Activated CD4-positive, alpha-beta memory T cell treated with anti-CD3 and anti-CD28 coated beads for 36 hours (primary cell): ENCODE measurements at regions of chr1 and their contacts with region 1.

Region 1: DNA sequence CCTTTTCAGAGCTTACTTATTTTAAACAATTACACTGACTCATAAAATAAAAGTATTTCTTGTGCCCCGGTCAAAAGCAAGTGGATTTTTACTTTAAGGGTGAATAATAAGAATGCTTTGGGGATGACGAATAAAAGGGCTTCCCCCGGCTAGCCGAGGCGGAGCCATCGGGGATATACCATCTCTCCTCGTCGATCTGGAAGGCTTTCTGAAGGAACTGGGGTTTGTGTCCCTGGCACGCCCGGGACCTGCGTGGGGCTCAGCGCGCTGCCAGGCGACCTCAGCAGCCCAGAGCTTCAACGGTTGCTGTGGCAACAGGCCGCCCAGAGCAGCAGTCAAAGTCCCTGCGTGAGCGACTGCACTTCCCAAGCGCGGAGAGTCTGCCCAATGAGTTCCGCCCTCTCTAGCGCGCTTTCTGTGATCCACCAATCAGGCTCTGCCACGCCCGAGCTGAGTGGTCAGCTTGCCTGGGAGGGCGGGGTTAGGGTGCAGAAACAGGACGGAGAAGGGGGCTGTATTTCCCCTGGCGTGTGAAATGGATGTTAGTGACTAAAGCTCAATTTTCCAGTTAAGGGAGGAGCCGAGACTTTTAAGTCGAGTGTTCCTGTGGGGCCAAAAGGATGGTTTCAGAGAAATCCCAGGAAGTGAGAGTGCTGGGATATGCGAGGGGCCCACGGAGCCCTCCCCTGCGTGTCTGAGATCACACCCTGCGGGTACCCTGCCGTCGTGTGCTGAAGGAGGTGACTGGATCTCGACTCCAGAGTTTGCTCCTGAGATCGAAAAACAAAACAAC is 33.0 kb upstream of the MGST3 start:
- DNase-seq: peak; percentile 98
- H3K4me3 Mint-ChIP-seq: peak overlapping the region; percentile 91
- H3K27ac Mint-ChIP-seq: peak overlapping the region; percentile 84
- H3K4me1 Mint-ChIP-seq: peaks cover 33% of the 10 kb centered on the region
- H3K27me3 Mint-ChIP-seq: peaks cover 20% of the 10 kb centered on the region

Region 2: DNA sequence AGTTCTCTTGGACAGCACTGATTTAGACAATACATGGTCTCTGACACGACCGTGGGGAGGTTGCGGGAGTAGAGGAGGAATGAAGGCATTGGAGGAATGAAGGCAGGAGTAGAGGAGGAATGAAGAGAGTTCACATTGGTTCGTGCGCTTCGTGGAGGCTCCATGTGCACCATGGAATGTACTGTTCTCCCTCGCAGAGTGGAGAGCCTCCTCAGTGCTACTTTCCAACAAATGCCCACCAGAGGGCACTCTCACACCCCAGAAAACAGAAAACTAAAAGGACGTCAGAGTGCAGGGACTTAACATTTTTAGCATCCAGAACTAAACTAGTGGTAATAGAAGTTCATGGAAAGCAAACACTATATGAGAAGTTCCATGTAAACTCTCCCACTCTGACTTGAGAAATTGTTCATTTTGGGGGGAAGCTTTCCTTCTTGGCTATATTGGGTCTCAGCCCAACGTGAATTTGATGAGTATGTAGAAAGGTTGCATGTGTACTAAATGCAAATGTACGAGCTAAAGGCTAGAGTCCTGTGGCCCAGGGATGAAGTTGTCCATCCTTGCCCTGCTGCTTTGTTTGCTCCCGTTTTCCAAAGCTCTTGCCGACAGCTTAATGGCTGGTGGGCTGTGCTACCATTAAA is 453.2 kb before region 1 on chr1:
- CTCF ChIA-PET with region 1: no interaction called
- POLR2A ChIA-PET with region 1: no interaction called
- intact Hi-C with region 1: loop called (anchors 10 kb)
- DNase-seq: peak; percentile 49
- H3K4me3 Mint-ChIP-seq: no peak overlapping the region
- H3K27ac Mint-ChIP-seq: no peak overlapping the region
- H3K4me1 Mint-ChIP-seq: no peaks in the 10 kb centered on the region
- H3K27me3 Mint-ChIP-seq: peaks cover 5% of the 10 kb centered on the region

Region 3: DNA sequence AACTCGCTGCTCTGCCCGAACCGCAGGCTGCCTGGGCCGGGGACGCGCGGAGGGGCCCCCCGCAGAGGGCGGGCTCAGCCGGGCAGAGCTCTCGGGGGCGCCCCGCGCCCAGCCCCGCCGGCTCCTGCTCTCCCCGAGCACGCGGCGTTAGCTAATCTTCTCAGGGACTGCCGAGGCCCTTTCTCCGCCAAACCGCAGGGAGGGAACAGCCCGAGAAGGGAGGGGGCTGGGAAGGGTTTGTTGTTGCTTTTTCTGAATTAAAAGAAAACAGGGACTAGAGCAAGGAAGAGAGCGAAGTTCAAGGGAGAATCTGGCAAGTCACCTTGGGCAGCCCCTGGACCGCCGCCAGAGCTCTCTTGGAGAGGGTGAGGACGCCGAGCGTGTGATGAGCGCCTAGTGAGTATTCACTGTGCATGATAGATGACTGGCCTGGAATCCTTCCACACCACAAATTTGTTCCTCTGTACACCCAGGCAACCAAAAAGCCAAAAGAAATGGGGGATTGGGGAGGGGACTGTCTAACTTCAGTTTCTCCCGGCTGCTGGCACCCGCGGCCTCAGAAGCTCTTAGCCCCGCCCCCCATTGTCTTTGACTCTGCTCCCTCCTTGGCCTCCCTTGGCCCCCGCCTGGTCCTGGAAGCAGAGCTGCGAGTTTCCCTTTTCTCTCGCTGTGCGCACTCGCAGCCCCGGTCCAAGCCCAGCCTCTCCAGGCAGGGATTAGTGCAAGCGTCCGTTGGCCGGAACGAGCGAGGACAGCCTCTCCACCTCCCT is 221.9 kb before region 1 on chr1:
- CTCF ChIA-PET with region 1: no interaction called
- POLR2A ChIA-PET with region 1: no interaction called
- intact Hi-C with region 1: no loop called
- DNase-seq: peak; percentile 64
- H3K4me3 Mint-ChIP-seq: peak overlapping the region; percentile 50
- H3K27ac Mint-ChIP-seq: no peak overlapping the region
- H3K4me1 Mint-ChIP-seq: peaks cover 16% of the 10 kb centered on the region
- H3K27me3 Mint-ChIP-seq: peaks cover 51% of the 10 kb centered on the region

Region 4: DNA sequence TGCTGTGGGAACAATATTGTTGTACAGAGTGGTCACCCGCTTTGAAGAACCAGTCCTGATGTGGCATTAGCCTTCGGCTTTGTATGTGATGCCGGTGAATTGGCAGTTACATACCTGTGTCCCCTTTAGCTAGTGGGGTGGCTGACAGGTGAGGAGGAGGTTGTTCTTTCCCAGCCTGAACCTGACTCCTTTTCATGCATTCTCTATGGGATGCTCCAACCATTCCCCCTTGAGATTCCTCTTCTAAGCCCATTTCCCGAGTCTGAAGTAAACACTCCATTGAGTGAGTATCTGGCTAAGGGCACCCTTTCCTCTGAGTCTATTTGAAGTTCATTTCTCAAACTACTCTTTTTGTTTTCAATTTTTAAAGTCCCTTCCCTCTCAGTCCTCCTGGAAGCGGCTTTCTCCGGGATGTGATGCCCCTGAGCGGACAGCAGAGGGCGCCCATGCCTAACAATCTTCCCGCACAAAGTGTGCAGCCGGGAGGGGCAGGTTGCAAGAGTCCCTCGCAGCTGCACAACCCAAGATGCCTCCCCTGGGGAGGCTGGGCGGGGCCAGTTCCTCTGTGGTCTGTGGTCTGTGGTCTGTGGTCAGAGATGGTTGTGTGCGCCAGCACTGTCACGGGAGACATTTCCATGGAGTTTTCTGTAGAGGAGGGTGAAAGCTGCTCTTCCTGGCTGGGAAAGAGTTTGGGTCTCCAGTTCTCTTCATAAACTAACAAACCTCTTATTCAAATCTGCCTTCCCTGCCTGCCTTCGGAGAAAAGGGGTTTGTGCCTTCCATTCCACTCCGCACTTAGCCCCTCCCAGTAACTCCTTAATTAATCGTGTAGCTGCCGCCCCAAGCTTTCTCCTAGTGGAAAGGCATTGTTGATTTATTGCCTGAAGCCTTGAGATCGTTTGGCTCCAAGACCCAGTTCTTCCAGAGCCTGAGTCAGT is 205.2 kb before region 1 on chr1:
- CTCF ChIA-PET with region 1: interaction called, 312 read pairs
- POLR2A ChIA-PET with region 1: no interaction called
- intact Hi-C with region 1: loop called (anchors 1 kb)
- DNase-seq: peak; percentile 93
- H3K4me3 Mint-ChIP-seq: peak overlapping the region; percentile 66
- H3K27ac Mint-ChIP-seq: peak overlapping the region; percentile 81
- H3K4me1 Mint-ChIP-seq: peaks cover 20% of the 10 kb centered on the region
- H3K27me3 Mint-ChIP-seq: peaks cover 57% of the 10 kb centered on the region

Region 5: GRCh38 chr1:165490175-165490574 is 107.9 kb before region 1 on chr1:
- CTCF ChIA-PET with region 1: no interaction called
- POLR2A ChIA-PET with region 1: no interaction called
- intact Hi-C with region 1: no loop called
- DNase-seq: no peak
- H3K4me3 Mint-ChIP-seq: no peak overlapping the region
- H3K27ac Mint-ChIP-seq: no peak overlapping the region
- H3K4me1 Mint-ChIP-seq: peaks cover 6% of the 10 kb centered on the region
- H3K27me3 Mint-ChIP-seq: peaks cover 24% of the 10 kb centered on the region

Region 6: DNA sequence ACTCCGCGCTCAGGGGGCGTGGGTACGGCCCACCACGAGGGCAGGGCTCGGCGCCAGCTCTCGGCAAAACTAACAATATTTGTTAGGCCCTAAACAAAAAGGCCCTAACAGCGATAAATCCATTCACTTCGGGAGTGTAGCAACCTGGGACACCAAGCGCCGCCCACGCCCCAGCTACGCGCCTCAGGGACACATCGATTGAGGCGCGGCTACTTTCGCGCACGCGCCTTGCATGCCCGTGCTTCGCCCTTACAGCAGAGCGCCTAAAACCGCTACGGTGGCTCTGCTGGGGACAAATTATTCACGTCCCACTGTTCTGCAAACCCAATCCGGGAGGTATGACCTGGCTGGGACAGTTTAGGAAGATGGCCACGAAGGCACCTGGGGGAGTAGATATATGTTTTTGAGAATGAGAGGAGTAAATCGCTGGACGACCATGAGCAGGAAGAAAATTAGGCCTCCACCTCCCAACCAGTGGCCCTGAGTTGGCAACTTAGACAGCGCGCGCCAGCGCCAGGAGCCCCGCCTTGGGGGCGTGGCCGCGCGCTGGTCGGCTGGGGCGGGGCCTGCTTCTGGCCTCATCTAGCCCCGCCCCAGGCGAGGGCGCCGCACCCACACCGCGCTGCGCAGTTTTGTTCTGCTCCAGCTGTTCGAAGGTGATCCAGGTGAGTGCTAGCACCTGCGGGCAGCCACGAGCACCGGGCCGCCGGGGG is 32.7 kb after region 1 on chr1 and contains the start of gene MGST3:
- CTCF ChIA-PET with region 1: interaction called, 9 read pairs
- POLR2A ChIA-PET with region 1: interaction called, 7 read pairs
- intact Hi-C with region 1: loop called (anchors 1 kb)
- DNase-seq: peak; percentile 97
- H3K4me3 Mint-ChIP-seq: no peak within 1 kb of the TSS
- H3K27ac Mint-ChIP-seq: no peak within 1 kb of the TSS
- H3K4me1 Mint-ChIP-seq: peaks cover 15% of the 10 kb centered on the region
- H3K27me3 Mint-ChIP-seq: no peaks in the 10 kb centered on the region
- total RNA-seq, gene MGST3: 53.3 to 56.6 TPM

Region 7: GRCh38 chr1:165717918-165718515 is 119.9 kb after region 1 on chr1:
- CTCF ChIA-PET with region 1: no interaction called
- POLR2A ChIA-PET with region 1: no interaction called
- intact Hi-C with region 1: no loop called
- DNase-seq: peak; percentile 39
- H3K4me3 Mint-ChIP-seq: no peak overlapping the region
- H3K27ac Mint-ChIP-seq: no peak overlapping the region
- H3K4me1 Mint-ChIP-seq: no peaks in the 10 kb centered on the region
- H3K27me3 Mint-ChIP-seq: no peaks in the 10 kb centered on the region

Region 8: GRCh38 chr1:165768513-165769394 is 170.7 kb after region 1 on chr1 and contains the start of gene TMCO1:
- CTCF ChIA-PET with region 1: interaction called, 4 read pairs
- POLR2A ChIA-PET with region 1: no interaction called
- intact Hi-C with region 1: loop called (anchors 1 kb)
- DNase-seq: peak; percentile 96
- H3K4me3 Mint-ChIP-seq: peak within 1 kb of the TSS; percentile 99
- H3K27ac Mint-ChIP-seq: peak within 1 kb of the TSS; percentile 99
- H3K4me1 Mint-ChIP-seq: peaks cover 57% of the 10 kb centered on the region
- H3K27me3 Mint-ChIP-seq: no peaks in the 10 kb centered on the region
- total RNA-seq, gene TMCO1: 73.2 to 76.7 TPM

Region 9: GRCh38 chr1:165914136-165914798 is 316.2 kb after region 1 on chr1:
- CTCF ChIA-PET with region 1: interaction called, 81 read pairs
- POLR2A ChIA-PET with region 1: no interaction called
- intact Hi-C with region 1: loop called (anchors 1 kb)
- DNase-seq: peak; percentile 71
- H3K4me3 Mint-ChIP-seq: no peak overlapping the region
- H3K27ac Mint-ChIP-seq: no peak overlapping the region
- H3K4me1 Mint-ChIP-seq: peaks cover 3% of the 10 kb centered on the region
- H3K27me3 Mint-ChIP-seq: no peaks in the 10 kb centered on the region